Activated CD4-positive, alpha-beta memory T cell treated with anti-CD3 and anti-CD28 coated beads for 36 hours (primary cell): ENCODE measurements at regions of chr15 and their contacts with region 1.

Region 1: GRCh38 chr15:48877630-48878595 is at the start of gene EID1:
- DNase-seq: peak; percentile 96
- H3K4me3 Mint-ChIP-seq: peak within 1 kb of the TSS; percentile 99
- H3K27ac Mint-ChIP-seq: peak within 1 kb of the TSS; percentile 96
- H3K4me1 Mint-ChIP-seq: peaks cover 44% of the 10 kb centered on the region
- H3K27me3 Mint-ChIP-seq: peaks cover 12% of the 10 kb centered on the region
- total RNA-seq, gene EID1: 88.3 to 90.0 TPM

Region 2: DNA sequence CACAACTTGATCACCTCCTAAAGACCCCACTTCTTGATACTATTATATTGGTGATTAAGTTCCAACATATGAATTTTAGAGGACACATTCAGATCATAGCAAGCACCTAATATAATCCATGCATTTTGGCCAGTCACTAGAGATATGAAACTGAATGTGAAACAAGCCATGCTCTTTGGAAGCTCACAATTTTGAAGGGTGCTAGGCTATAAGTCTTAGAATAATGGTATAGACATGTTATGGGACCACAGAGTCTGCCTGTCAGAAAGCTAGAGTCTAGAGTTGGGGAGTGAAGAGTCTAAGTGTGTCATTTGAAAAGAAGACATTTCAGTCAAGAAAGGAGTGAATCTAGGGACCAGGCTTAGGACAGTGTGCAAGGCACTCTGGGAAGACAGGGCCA is 943.6 kb before region 1 on chr15:
- CTCF ChIA-PET with region 1: no interaction called
- POLR2A ChIA-PET with region 1: no interaction called
- intact Hi-C with region 1: no loop called
- DNase-seq: no peak
- H3K4me3 Mint-ChIP-seq: no peak overlapping the region
- H3K27ac Mint-ChIP-seq: no peak overlapping the region
- H3K4me1 Mint-ChIP-seq: no peaks in the 10 kb centered on the region
- H3K27me3 Mint-ChIP-seq: peaks cover 6% of the 10 kb centered on the region

Region 3: GRCh38 chr15:48507416-48508065 is 370.4 kb before region 1 on chr15:
- CTCF ChIA-PET with region 1: no interaction called
- POLR2A ChIA-PET with region 1: no interaction called
- intact Hi-C with region 1: no loop called
- DNase-seq: no peak
- H3K4me3 Mint-ChIP-seq: no peak overlapping the region
- H3K27ac Mint-ChIP-seq: no peak overlapping the region
- H3K4me1 Mint-ChIP-seq: no peaks in the 10 kb centered on the region
- H3K27me3 Mint-ChIP-seq: no peaks in the 10 kb centered on the region

Region 4: GRCh38 chr15:48810414-48811317 is 67.2 kb before region 1 on chr15 and contains the start of gene CEP152:
- CTCF ChIA-PET with region 1: interaction called, 5 read pairs
- POLR2A ChIA-PET with region 1: interaction called, 14 read pairs
- intact Hi-C with region 1: loop called (anchors 1 kb)
- DNase-seq: peak; percentile 99
- H3K4me3 Mint-ChIP-seq: peak within 1 kb of the TSS; percentile 96
- H3K27ac Mint-ChIP-seq: peak within 1 kb of the TSS; percentile 95
- H3K4me1 Mint-ChIP-seq: peaks cover 36% of the 10 kb centered on the region
- H3K27me3 Mint-ChIP-seq: peaks cover 1% of the 10 kb centered on the region
- total RNA-seq, gene CEP152: 36.1 to 39.4 TPM

Region 5: DNA sequence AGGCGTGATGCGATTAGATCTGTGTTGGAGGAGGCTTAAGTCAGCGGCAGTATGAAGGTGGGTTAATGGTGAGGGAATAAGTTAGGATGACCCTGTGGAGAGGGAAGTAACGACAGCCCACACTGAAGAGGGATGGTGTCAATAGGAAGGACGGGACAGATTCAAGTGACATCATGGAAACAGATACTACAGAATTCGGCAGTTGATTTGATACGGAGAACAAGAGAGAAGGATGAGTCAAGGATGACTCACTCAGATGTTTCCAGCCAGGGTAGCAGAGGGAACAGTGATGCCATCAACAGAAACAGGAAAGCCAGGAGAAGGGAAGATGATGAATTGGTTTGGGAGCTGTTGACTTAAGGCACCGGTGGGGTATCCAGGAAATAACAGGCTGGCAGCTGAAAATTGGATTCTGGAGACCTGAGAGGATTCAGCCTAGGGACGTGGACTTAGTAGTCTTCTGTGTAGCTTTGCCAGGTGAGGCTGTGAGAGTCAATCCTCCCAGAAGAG is 47.9 kb after region 1 on chr15:
- CTCF ChIA-PET with region 1: no interaction called
- POLR2A ChIA-PET with region 1: interaction called, 6 read pairs
- intact Hi-C with region 1: loop called (anchors 2 kb)
- DNase-seq: peak; percentile 28
- H3K4me3 Mint-ChIP-seq: no peak overlapping the region
- H3K27ac Mint-ChIP-seq: peak overlapping the region; percentile 54
- H3K4me1 Mint-ChIP-seq: peaks cover 42% of the 10 kb centered on the region
- H3K27me3 Mint-ChIP-seq: peaks cover 12% of the 10 kb centered on the region

Region 6: DNA sequence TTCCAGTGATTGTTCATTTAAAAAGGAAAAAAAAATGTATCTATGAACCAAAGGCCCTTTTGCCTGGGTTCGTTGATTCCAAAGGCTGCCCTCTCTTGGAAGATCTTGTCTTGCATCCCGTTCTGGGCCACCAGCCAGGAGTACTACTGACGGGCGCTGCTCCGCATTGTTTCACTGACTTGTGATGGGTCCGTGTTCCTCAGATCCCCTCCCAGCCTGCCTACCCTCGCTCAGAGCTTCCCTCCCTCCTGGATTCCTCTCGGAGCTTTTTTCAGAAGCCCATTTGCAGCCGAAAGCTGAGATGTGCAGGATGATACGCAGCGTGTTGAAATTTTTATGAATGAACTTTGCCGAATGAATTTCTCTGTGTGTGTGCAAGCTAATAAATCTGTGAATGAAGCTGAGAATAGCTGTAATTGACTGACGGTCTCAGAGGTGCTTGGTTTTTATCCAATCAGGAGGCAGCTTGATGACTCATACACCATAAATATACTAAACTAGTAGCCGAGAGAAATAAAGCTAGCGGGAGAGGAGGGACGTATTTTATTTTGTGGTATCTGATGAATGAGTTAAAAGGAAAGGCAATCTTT is 85.7 kb after region 1 on chr15 and contains the start of gene SHC4:
- CTCF ChIA-PET with region 1: interaction called, 10 read pairs
- POLR2A ChIA-PET with region 1: interaction called, 3 read pairs
- intact Hi-C with region 1: loop called (anchors 1 kb)
- DNase-seq: no peak
- H3K4me3 Mint-ChIP-seq: peak within 1 kb of the TSS; percentile 61
- H3K27ac Mint-ChIP-seq: no peak within 1 kb of the TSS
- H3K4me1 Mint-ChIP-seq: peaks cover 32% of the 10 kb centered on the region
- H3K27me3 Mint-ChIP-seq: peaks cover 25% of the 10 kb centered on the region
- total RNA-seq, gene SHC4: 1.9 to 2.6 TPM

Region 7: DNA sequence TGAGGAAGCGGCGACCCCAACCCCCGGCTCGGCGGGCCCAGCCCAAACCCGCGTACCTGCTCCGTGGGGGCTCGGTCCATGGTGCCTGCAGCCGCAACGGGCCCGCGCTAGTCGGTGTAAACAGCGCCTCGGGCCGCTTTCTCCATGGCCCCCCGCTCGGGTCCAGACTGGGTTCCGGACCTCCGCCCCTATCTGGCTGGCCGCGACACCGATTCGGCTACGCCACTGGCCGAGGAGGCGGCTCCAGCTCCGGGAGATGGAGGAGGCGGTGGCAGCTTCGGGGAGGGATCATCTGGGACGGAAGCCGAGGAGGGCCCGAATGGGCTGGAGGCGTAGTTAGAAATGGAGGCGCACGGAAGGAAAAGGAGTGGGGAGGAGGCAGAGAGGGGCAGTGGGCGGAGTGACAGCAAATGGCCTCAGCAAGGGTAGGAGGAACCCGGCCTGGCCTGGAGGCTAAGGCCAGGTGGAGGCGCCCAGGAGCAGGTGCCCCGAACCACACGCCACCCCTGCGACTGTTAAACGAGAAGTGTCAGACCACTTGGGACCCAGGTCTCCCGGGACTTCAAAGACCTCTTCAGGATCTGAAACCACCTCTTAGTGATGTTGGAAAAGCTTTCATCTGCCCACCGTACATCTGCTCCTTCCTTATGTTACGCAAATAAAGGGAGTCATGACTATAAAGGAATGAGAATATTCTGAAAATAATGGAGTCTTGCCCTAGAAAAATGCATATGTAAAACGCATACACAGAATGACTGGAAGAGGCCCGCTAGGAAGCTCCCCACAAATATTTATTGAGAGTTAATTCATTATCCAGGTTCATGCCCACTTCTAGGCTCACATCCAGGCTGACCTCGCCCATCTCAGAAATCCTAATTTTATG is 168.5 kb after region 1 on chr15 and contains the start of gene SECISBP2L:
- CTCF ChIA-PET with region 1: interaction called, 5 read pairs
- POLR2A ChIA-PET with region 1: interaction called, 5 read pairs
- intact Hi-C with region 1: loop called (anchors 1 kb)
- DNase-seq: peak; percentile 96
- H3K4me3 Mint-ChIP-seq: peak within 1 kb of the TSS; percentile 91
- H3K27ac Mint-ChIP-seq: peak within 1 kb of the TSS; percentile 76
- H3K4me1 Mint-ChIP-seq: peaks cover 28% of the 10 kb centered on the region
- H3K27me3 Mint-ChIP-seq: no peaks in the 10 kb centered on the region
- total RNA-seq, gene SECISBP2L: 22.5 to 24.6 TPM

Region 8: DNA sequence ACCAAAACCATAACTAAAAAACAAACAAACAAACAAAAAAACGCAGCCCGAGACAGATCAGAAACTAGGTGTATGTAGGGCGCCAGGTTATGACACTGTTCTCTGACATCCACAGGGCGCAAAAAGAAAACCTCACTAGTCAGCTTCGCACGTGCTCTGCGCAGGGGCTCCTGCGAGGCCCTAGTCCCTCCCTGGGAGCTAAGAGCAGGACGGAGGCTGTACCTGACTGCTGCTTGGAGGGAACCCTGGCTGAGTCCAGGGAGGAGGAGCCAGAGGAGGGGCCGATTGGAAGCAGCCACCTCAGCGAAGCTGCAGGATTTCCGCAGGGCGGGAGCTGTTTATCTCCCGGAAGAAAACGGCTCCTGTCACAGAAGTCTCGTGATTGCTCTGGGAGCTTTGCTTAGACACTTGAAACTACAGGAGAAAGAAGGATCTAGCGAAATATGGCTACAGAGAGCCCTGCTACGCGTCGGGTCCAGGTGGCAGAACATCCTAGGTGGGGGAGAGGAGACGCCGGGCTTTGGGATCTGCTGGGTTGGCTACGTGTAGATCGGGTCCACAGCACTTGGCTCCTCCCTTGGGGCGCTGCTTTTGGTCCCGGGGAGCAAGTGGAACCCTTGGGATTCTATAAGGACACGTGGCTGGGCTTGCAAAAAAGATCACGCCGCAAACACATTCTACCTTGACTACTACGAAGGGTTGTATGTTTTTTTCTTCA is 292.1 kb after region 1 on chr15 and contains the start of gene GALK2:
- CTCF ChIA-PET with region 1: interaction called, 3 read pairs
- POLR2A ChIA-PET with region 1: interaction called, 6 read pairs
- intact Hi-C with region 1: loop called (anchors 2 kb)
- DNase-seq: peak; percentile 92
- H3K4me3 Mint-ChIP-seq: peak within 1 kb of the TSS; percentile 87
- H3K27ac Mint-ChIP-seq: peak within 1 kb of the TSS; percentile 88
- H3K4me1 Mint-ChIP-seq: peaks cover 30% of the 10 kb centered on the region
- H3K27me3 Mint-ChIP-seq: no peaks in the 10 kb centered on the region
- total RNA-seq, gene GALK2: 31.1 to 33.1 TPM

Region 9: DNA sequence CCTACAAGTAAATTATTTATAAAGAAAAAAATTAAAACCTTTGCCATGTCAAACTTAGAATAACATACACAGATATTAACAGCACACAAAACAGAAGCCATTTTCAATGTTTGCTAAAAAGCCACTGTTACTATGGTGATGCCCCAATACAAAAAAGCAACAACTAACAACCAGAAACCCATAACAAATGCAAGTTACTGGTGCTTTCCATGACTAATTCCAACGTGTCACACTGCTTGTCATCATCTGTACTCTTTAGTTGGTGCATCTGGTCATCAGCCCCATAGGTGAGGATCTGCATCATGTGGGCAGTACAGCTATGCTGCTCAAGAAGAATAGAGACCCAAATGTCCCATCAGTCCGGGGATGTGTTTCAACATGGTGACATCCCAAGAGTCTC is 1188.3 kb after region 1 on chr15:
- CTCF ChIA-PET with region 1: no interaction called
- POLR2A ChIA-PET with region 1: no interaction called
- intact Hi-C with region 1: loop called (anchors 10 kb)
- DNase-seq: peak; percentile 22
- H3K4me3 Mint-ChIP-seq: no peak overlapping the region
- H3K27ac Mint-ChIP-seq: no peak overlapping the region
- H3K4me1 Mint-ChIP-seq: peaks cover 8% of the 10 kb centered on the region
- H3K27me3 Mint-ChIP-seq: peaks cover 10% of the 10 kb centered on the region